ENCODE measurements at regions of chr12 and their contacts with region 1.

Region 1: GRCh38 chr12:47307680-47308399 is 228.1 kb upstream of the AMIGO2 start:
- DNase-seq: peak; percentile 13 to 70 (median 35)
- ATAC-seq: peak; percentile 95
- H3K4me3 ChIP-seq: no peak overlapping the region
- H3K27ac ChIP-seq: no peak overlapping the region
- H3K4me1 ChIP-seq: peaks cover 0 to 4% of the 10 kb centered on the region in 2 experiments; a peak in 2 of 5 replicates
- H3K27me3 ChIP-seq: no peaks in the 10 kb centered on the region
- CTCF ChIP-seq: peak; percentile 64 to 71 (median 70)
- EP300 ChIP-seq: no peak
- POLR2A ChIP-seq: no peak
- RAD21 ChIP-seq: peak; percentile 59 to 96

Region 2: GRCh38 chr12:47216150-47216677 is 91.6 kb before region 1 on chr12:
- CTCF ChIA-PET with region 1: no interaction called
- POLR2A ChIA-PET with region 1: no interaction called
- in situ Hi-C with region 1: no loop called
- intact Hi-C with region 1: loop called (anchors 5 kb)
- DNase-seq: peak in 1 of 4 experiments; percentile 53
- ATAC-seq: peak; percentile 25
- H3K4me3 ChIP-seq: no peak overlapping the region
- H3K27ac ChIP-seq: peak overlapping the region; percentile 81
- H3K4me1 ChIP-seq: peaks cover 3 to 20% of the 10 kb centered on the region in 2 experiments; a peak in 4 of 5 replicates
- H3K27me3 ChIP-seq: no peaks in the 10 kb centered on the region
- CTCF ChIP-seq: no peak
- EP300 ChIP-seq: no peak
- POLR2A ChIP-seq: no peak
- RAD21 ChIP-seq: no peak

Region 3: DNA sequence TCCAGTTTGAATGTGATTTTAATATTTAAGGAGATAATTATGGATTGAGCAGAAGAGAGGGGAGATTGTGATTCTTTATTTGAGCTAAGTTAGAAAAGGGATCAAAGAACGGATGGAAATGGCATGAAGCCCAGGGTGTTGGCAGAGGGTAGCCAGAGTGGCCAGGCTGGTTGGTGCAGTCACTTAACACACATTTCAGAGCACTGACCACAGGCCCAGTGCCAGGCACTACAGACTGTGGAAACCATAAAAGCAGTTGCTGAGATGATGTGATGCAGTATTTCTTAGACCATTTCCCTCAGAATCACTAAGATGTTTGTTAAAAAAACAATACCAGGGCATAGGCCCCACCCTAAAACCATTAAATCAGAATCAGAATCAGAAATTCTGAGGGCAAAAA is 60.4 kb before region 1 on chr12:
- CTCF ChIA-PET with region 1: no interaction called
- POLR2A ChIA-PET with region 1: no interaction called
- in situ Hi-C with region 1: no loop called
- intact Hi-C with region 1: loop called (anchors 10 kb)
- DNase-seq: no peak
- ATAC-seq: no peak
- H3K4me3 ChIP-seq: no peak overlapping the region
- H3K27ac ChIP-seq: no peak overlapping the region
- H3K4me1 ChIP-seq: peaks cover 16 to 32% of the 10 kb centered on the region in 2 experiments; a peak in 4 of 5 replicates
- H3K27me3 ChIP-seq: no peaks in the 10 kb centered on the region
- CTCF ChIP-seq: no peak
- EP300 ChIP-seq: no peak
- POLR2A ChIP-seq: no peak
- RAD21 ChIP-seq: no peak

Region 4: GRCh38 chr12:47397664-47398281 is 89.9 kb after region 1 on chr12:
- CTCF ChIA-PET with region 1: no interaction called
- POLR2A ChIA-PET with region 1: no interaction called
- in situ Hi-C with region 1: no loop called
- intact Hi-C with region 1: loop called (anchors 5 kb)
- DNase-seq: peak in 2 of 4 experiments; percentile 32 to 57
- ATAC-seq: peak; percentile 95
- H3K4me3 ChIP-seq: no peak overlapping the region
- H3K27ac ChIP-seq: no peak overlapping the region
- H3K4me1 ChIP-seq: peaks cover 0 to 8% of the 10 kb centered on the region in 2 experiments; a peak in 1 of 5 replicates
- H3K27me3 ChIP-seq: no peaks in the 10 kb centered on the region
- CTCF ChIP-seq: peak; percentile 46 to 71 (median 56); a peak in 5 of 6 replicates
- EP300 ChIP-seq: no peak
- POLR2A ChIP-seq: no peak
- RAD21 ChIP-seq: peak; percentile 65 to 86

Measured in K562 (cell line).